Heart right ventricle (tissue), 16 donors: ENCODE measurements at regions of chr17 and their contacts with region 1.

Region 1: DNA sequence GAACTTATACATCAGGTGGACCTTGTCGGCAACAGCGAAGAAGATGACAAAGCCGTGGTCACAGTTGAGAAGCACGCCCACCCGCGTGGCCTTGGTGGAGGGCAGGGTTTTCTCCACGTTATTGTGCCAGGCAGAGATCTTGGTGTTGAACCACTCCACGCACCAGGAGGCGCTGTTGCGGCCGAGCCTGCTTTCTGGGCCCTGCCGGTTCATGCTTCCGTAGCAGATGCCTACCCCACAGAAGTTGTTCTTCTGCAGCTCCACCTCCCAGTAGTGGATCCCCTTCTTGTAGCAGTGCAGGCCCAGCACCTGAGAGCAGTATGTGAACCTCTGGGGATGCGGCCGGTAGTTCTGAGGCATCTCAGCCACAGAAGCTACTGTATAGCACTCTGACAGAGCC is 22.1 kb downstream of the TRIM25 start:
- DNase-seq: peak in 1 of 2 donors; percentile 44
- ATAC-seq: peak in 2 of 8 donors; percentile 48 to 53
- H3K4me3 ChIP-seq: no peak overlapping the region
- H3K27ac ChIP-seq: no peak overlapping the region
- H3K4me1 ChIP-seq: peaks cover 0 to 13% (median 0%) of the 10 kb centered on the region in 9 donors
- H3K27me3 ChIP-seq: no peaks in the 10 kb centered on the region
- CTCF ChIP-seq: peak; percentile 14 to 57 (median 39)

Region 2: GRCh38 chr17:56939901-56940343 is 48.1 kb after region 1 on chr17:
- intact Hi-C with region 1: loop called in 5 of 10 experiments (anchors 2 to 10 kb)
- DNase-seq: no peak
- ATAC-seq: peak; percentile 37 to 71 (median 56)
- H3K4me3 ChIP-seq: no peak overlapping the region
- H3K27ac ChIP-seq: no peak overlapping the region
- H3K4me1 ChIP-seq: peaks cover 0 to 18% (median 4%) of the 10 kb centered on the region in 9 donors
- H3K27me3 ChIP-seq: no peaks in the 10 kb centered on the region
- CTCF ChIP-seq: peak; percentile 46 to 84 (median 71)